ENCODE measurements at regions of chr17 and their contacts with region 1.

Region 1: DNA sequence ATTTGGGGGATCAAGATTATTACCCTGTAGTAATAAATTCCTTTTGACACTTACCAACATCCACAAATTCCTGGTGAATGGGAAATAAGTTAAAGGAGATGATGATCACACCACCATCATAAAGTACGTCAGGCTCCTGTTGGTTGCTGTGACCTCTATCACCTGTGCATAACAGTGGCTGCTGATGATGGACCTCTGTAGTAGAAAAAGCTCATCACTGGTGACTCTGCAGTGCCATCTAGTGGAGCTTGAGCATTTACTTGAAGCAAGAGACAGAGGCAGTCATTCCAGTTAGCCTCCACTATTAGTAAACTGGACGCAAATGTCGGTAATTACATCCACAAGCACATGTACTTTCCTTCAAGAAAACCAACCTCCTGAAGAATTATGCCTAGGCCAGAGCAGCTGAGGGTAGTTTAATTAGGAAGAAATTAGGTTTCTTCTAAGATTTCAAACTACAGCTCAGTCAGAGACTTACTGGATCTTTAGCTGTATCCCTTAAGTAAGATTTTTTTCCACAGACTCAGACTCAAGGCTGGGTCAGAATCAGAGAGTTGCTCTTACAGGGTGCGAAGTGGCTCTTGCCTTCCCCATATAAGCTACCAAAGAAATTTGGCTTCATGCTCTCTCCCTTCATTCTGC is 39.3 kb downstream of the CYB561 start:
- DNase-seq: peak; percentile 75
- ATAC-seq: peak; percentile 93
- H3K4me3 Mint-ChIP-seq: no peak overlapping the region
- H3K27ac Mint-ChIP-seq: no peak overlapping the region
- H3K4me1 Mint-ChIP-seq: peaks cover 2% of the 10 kb centered on the region
- H3K27me3 Mint-ChIP-seq: no peaks in the 10 kb centered on the region
- CTCF ChIP-seq: peak; percentile 72

Region 2: DNA sequence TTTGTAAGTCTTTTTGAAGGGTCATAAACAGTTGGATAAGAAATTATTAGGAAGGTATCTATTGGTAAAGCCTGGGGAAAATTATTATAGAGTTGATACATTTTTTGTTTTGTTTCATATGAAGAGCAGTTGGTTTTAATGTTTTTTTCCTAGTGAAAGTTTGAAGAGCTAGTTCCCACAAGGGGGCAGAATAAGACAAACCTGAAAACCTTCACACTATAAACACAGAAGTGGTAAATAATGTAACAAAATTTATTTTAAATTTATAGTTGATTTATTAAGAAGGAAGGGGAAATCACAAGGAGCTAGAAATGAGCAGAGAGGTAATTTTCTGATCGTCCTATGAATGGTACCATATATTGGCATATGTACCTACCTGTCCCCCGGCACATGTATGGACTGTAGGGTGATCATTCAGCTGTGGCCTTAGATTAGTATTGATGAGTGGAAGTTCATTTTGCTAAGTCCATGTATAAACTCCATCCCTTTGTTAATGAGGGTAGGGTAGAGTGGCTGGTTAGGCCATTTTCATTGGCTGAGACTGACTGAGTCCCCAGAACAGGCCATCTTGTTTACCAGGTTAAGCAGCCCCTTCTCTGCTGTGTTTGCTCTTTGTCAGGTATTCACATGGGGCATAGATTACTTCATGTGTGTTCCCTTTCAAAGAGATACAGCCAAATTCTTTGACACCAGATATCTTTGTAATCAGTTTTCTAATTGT is 324.4 kb before region 1 on chr17:
- CTCF ChIA-PET with region 1: interaction called, 31 read pairs
- POLR2A ChIA-PET with region 1: no interaction called
- DNase-seq: no peak
- ATAC-seq: no peak
- H3K4me3 Mint-ChIP-seq: no peak overlapping the region
- H3K27ac Mint-ChIP-seq: no peak overlapping the region
- H3K4me1 Mint-ChIP-seq: peaks cover under 1% of the 10 kb centered on the region; the same call in 1 of the 2 replicates
- H3K27me3 Mint-ChIP-seq: no peaks in the 10 kb centered on the region
- CTCF ChIP-seq: no peak

Region 3: DNA sequence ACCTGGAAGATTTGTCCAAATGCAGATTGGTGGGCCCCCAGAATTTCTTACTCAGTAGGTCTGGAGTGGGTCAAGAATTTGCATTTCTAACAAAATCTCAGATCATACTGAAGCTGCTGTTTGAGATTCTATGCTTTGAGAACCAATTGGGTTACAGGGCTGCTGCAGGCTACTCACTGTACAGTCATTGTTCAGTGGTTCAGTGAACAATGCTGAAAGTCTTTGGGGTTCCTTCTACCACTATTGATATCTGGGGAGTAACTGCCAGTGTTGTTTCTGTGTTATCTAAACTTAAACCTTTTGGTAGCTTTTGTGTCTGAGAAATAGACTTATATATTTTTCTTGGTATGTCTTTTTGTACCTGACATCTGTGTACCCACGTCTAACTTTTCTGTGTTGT is 253.3 kb before region 1 on chr17:
- CTCF ChIA-PET with region 1: no interaction called
- POLR2A ChIA-PET with region 1: no interaction called
- DNase-seq: no peak
- ATAC-seq: no peak
- H3K4me3 Mint-ChIP-seq: no peak overlapping the region
- H3K27ac Mint-ChIP-seq: no peak overlapping the region
- H3K4me1 Mint-ChIP-seq: peaks cover 42% of the 10 kb centered on the region
- H3K27me3 Mint-ChIP-seq: no peaks in the 10 kb centered on the region
- CTCF ChIP-seq: no peak

Region 4: DNA sequence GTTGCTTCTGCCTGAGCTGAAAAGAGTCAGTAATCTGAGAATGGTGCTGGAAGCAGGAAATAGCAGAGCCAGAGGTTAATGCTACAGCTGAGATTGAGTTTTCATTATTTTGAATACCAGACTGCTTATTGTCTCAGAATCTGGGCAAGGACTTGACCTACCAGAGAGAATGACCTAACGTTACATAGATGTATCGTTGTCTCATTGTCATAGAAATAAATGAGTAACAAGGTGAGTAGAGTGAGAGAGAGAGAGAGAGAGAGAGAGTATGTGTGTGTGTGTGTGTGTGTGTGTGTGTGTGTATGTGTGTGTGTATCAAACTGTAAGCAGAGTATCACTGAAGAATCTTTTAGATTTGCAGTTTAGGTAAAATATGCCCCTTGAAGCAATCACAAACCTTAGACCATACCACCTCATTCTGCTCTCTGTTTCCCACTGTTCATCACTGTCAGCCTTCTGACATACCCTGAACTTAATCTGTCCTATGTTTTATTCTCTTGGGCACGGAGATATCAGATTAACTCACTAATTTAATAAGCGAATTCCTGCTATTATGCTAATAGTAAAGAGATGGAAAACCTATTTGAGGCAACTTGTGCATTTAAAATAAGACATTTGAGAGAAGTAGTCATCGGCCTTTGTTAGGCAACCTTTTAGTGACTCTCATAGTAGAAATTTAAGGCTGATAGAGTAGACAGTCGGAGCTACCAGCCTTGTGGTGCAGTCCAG is 48.5 kb before region 1 on chr17:
- CTCF ChIA-PET with region 1: no interaction called
- POLR2A ChIA-PET with region 1: no interaction called
- DNase-seq: no peak
- ATAC-seq: no peak
- H3K4me3 Mint-ChIP-seq: no peak overlapping the region
- H3K27ac Mint-ChIP-seq: peak overlapping the region; percentile 0; the same call in 1 of the 2 replicates
- H3K4me1 Mint-ChIP-seq: no peaks in the 10 kb centered on the region
- H3K27me3 Mint-ChIP-seq: no peaks in the 10 kb centered on the region
- CTCF ChIP-seq: no peak

Region 5: DNA sequence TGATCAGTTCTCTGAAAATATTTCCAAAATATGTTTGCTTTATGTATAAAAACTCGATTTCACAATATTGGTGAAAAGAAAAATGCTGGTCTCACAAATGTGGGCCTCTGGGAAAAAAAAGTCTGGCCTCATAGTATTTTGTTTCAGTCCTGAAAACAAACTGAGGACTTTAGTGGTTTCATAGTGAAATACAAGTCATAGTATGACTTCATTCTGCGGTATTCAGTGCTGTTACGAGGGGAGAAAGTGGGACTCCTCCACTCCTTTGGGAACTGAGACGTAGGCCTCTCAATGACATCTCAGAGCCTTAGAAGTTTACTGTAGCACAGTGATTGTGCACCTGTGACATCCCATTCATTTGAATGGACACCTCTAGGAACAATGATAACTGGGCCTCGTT is 16.7 kb before region 1 on chr17:
- CTCF ChIA-PET with region 1: interaction called, 15 read pairs
- POLR2A ChIA-PET with region 1: no interaction called
- DNase-seq: no peak
- ATAC-seq: no peak
- H3K4me3 Mint-ChIP-seq: no peak overlapping the region
- H3K27ac Mint-ChIP-seq: no peak overlapping the region
- H3K4me1 Mint-ChIP-seq: no peaks in the 10 kb centered on the region
- H3K27me3 Mint-ChIP-seq: no peaks in the 10 kb centered on the region
- CTCF ChIP-seq: no peak

Region 6: DNA sequence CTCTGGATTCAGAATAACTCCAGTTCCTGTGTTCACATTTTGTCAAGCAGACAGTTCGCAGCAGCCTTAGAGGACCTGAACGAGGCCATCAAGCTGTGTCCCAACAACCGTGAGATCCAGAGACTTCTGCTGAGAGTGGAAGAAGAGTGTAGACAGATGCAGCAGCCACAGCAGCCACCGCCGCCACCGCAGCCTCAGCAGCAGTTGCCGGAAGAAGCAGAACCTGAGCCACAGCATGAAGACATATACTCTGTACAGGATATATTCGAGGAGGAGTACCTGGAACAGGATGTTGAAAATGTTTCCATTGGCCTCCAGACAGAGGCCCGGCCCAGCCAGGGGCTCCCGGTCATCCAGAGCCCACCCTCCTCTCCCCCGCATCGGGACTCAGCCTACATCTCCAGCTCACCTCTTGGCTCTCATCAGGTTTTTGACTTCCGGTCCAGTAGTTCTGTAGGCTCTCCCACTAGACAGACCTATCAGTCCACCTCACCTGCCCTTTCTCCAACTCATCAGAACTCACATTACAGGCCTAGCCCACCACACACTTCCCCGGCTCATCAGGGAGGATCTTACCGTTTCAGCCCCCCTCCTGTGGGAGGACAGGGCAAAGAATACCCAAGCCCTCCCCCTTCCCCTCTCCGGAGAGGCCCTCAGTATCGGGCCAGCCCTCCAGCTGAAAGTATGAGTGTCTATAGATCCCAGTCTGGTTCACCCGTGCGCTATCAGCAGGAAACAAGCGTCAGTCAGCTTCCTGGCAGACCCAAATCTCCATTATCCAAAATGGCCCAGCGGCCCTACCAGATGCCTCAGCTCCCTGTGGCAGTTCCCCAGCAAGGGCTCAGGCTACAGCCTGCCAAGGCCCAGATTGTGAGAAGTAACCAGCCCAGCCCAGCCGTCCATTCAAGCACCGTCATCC is 13.4 kb after region 1 on chr17:
- CTCF ChIA-PET with region 1: interaction called, 56 read pairs
- POLR2A ChIA-PET with region 1: no interaction called
- DNase-seq: no peak
- ATAC-seq: no peak
- H3K4me3 Mint-ChIP-seq: no peak overlapping the region
- H3K27ac Mint-ChIP-seq: no peak overlapping the region
- H3K4me1 Mint-ChIP-seq: no peaks in the 10 kb centered on the region; the same call in 1 of the 2 replicates
- H3K27me3 Mint-ChIP-seq: no peaks in the 10 kb centered on the region
- CTCF ChIP-seq: no peak

Region 7: GRCh38 chr17:63455417-63455816 is 48.6 kb after region 1 on chr17:
- CTCF ChIA-PET with region 1: no interaction called
- POLR2A ChIA-PET with region 1: no interaction called
- DNase-seq: no peak
- ATAC-seq: no peak
- H3K4me3 Mint-ChIP-seq: no peak overlapping the region
- H3K27ac Mint-ChIP-seq: no peak overlapping the region
- H3K4me1 Mint-ChIP-seq: peaks cover 14% of the 10 kb centered on the region
- H3K27me3 Mint-ChIP-seq: peaks cover 7% of the 10 kb centered on the region
- CTCF ChIP-seq: no peak

Region 8: GRCh38 chr17:63478791-63479494 is 72.1 kb after region 1 on chr17:
- CTCF ChIA-PET with region 1: interaction called, 13 read pairs
- POLR2A ChIA-PET with region 1: no interaction called
- DNase-seq: peak; percentile 92
- ATAC-seq: peak; percentile 75
- H3K4me3 Mint-ChIP-seq: peak overlapping the region; percentile 14; the same call in 1 of the 2 replicates
- H3K27ac Mint-ChIP-seq: no peak overlapping the region
- H3K4me1 Mint-ChIP-seq: peaks cover 32% of the 10 kb centered on the region
- H3K27me3 Mint-ChIP-seq: peaks cover 28% of the 10 kb centered on the region
- CTCF ChIP-seq: peak; percentile 52; the same call in 1 of the 2 replicates

Region 9: DNA sequence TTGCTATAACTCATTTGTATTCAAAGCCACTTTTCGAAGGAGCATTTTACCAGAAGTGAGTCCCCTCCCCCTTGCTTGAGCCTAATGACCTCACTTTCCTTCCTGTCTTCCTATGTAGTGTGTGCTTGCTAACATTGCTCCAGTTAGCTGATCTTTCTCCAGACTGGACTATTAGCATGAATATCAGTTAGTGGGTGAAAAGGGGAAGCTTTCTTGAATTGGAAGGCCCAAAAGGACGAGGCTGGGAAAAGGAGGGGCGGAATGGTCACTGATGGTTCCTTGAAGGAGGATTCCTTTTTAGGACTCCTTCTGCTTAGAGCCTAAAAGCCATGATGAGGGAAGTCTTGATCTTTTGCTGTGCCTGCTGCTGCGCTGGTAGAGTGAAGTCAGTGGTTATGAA is 227.4 kb after region 1 on chr17:
- CTCF ChIA-PET with region 1: no interaction called
- POLR2A ChIA-PET with region 1: no interaction called
- DNase-seq: no peak
- ATAC-seq: peak; percentile 70
- H3K4me3 Mint-ChIP-seq: no peak overlapping the region
- H3K27ac Mint-ChIP-seq: peak overlapping the region; percentile 85
- H3K4me1 Mint-ChIP-seq: peaks cover 47% of the 10 kb centered on the region
- H3K27me3 Mint-ChIP-seq: no peaks in the 10 kb centered on the region
- CTCF ChIP-seq: no peak

Measured in WTC11 (cell line).